CD8-positive, alpha-beta T cell (primary cell): ENCODE measurements at regions of chr12 and their contacts with region 1.

Region 1: GRCh38 chr12:4648501-4649357 is at the starts of genes AKAP3 and NDUFA9:
- DNase-seq: peak; percentile 58 to 90 (median 82)
- ATAC-seq: peak; percentile 96
- H3K4me3 ChIP-seq: peak within 1 kb of the TSS; percentile 68 to 92
- H3K4me3 Mint-ChIP-seq: peak within 1 kb of the TSS; percentile 90
- H3K27ac ChIP-seq: peak within 1 kb of the TSS; percentile 62 to 77
- H3K27ac Mint-ChIP-seq: peak within 1 kb of the TSS; percentile 93
- H3K4me1 ChIP-seq: peaks cover 22% of the 10 kb centered on the region
- H3K4me1 Mint-ChIP-seq: peaks cover 51% of the 10 kb centered on the region
- H3K27me3 ChIP-seq: no peaks in the 10 kb centered on the region
- H3K27me3 Mint-ChIP-seq: no peaks in the 10 kb centered on the region
- CTCF ChIP-seq: no peak
- total RNA-seq, gene AKAP3: 1.1 to 1.3 TPM
- total RNA-seq, gene NDUFA9: 94.2 to 95.2 TPM

Region 2: GRCh38 chr12:4030929-4031702 is 617.6 kb before region 1 on chr12:
- CTCF ChIA-PET with region 1: no interaction called
- POLR2A ChIA-PET with region 1: no interaction called
- intact Hi-C with region 1: loop called in 1 of 2 experiments (anchors 2 kb)
- DNase-seq: peak; percentile 48 to 88 (median 71)
- ATAC-seq: peak; percentile 91
- H3K4me3 ChIP-seq: peak overlapping the region; percentile 40 to 49
- H3K4me3 Mint-ChIP-seq: peak overlapping the region; percentile 78
- H3K27ac ChIP-seq: peak overlapping the region; percentile 37 to 40
- H3K27ac Mint-ChIP-seq: peak overlapping the region; percentile 70
- H3K4me1 ChIP-seq: peaks cover 32% of the 10 kb centered on the region
- H3K4me1 Mint-ChIP-seq: peaks cover 41% of the 10 kb centered on the region
- H3K27me3 ChIP-seq: no peaks in the 10 kb centered on the region
- H3K27me3 Mint-ChIP-seq: no peaks in the 10 kb centered on the region
- CTCF ChIP-seq: no peak

Region 3: GRCh38 chr12:4320853-4321701 is 327.7 kb before region 1 on chr12 and contains the start of gene TIGAR:
- CTCF ChIA-PET with region 1: no interaction called
- POLR2A ChIA-PET with region 1: interaction called, 3 read pairs
- intact Hi-C with region 1: loop called in 1 of 2 experiments (anchors 10 kb)
- DNase-seq: peak; percentile 79 to 97 (median 90)
- ATAC-seq: peak; percentile 96
- H3K4me3 ChIP-seq: peak within 1 kb of the TSS; percentile 86 to 89
- H3K4me3 Mint-ChIP-seq: peak within 1 kb of the TSS; percentile 96
- H3K27ac ChIP-seq: peak within 1 kb of the TSS; percentile 81 to 83
- H3K27ac Mint-ChIP-seq: peak within 1 kb of the TSS; percentile 95
- H3K4me1 ChIP-seq: peaks cover 25% of the 10 kb centered on the region
- H3K4me1 Mint-ChIP-seq: peaks cover 40% of the 10 kb centered on the region
- H3K27me3 ChIP-seq: no peaks in the 10 kb centered on the region
- H3K27me3 Mint-ChIP-seq: no peaks in the 10 kb centered on the region
- CTCF ChIP-seq: no peak
- total RNA-seq, gene TIGAR: 14.0 to 15.8 TPM

Region 4: DNA sequence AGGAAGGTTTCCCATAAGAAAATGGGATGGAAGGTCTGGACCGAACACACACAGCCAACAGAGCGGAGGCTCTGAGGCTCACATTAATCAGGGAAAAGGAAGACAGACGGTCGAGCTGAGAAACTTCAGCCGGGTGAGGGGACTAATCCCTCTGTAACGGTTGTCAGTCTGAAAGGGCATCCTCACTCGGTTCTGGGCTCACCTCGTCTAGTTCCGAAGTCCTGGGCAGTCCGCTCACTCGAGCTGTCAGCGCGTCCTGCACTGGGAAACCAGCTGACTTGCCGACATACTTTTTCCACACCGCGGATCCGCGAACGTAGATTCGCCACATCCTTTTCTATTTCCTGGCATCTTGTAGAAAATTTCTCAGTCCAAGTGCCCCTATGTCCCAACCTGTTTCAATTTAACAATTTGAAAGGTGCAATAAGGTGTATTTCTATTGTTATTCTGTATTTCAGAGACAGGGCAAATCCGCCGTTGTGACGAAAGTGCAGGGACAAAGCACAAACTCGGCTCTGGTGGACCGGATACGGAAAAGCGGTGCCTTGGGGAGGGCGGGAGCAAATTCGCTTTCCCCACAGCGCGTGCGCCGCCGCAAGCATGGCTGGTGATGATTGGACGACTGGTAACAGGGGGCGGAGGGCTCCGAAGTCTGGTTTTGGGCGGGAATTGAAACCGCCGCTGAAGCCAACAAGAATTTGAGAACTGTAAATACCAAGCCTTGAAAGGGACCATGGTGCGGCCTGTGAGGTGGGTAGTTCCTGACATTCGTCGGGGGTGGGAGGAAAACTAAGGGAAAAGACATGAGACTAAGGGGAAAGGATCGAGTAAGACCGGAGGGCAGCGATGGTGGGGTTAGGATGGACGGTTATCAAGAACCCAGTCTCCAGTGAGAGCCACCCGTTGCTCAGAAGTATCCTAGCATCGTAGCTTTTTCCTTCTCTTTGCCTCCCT is 110.2 kb before region 1 on chr12 and contains the start of gene RAD51AP1:
- CTCF ChIA-PET with region 1: no interaction called
- POLR2A ChIA-PET with region 1: no interaction called
- intact Hi-C with region 1: loop called (anchors 1 to 2 kb)
- DNase-seq: peak; percentile 89 to 98 (median 94)
- ATAC-seq: peak; percentile 99
- H3K4me3 ChIP-seq: peak within 1 kb of the TSS; percentile 68 to 97
- H3K4me3 Mint-ChIP-seq: peak within 1 kb of the TSS; percentile 98
- H3K27ac ChIP-seq: peak within 1 kb of the TSS; percentile 85 to 97
- H3K27ac Mint-ChIP-seq: peak within 1 kb of the TSS; percentile 98
- H3K4me1 ChIP-seq: peaks cover 7% of the 10 kb centered on the region
- H3K4me1 Mint-ChIP-seq: peaks cover 26% of the 10 kb centered on the region
- H3K27me3 ChIP-seq: no peaks in the 10 kb centered on the region
- H3K27me3 Mint-ChIP-seq: no peaks in the 10 kb centered on the region
- CTCF ChIP-seq: no peak
- total RNA-seq, gene RAD51AP1: 0.87 to 1.6 TPM

Region 5: GRCh38 chr12:4591180-4591687 is 57.5 kb before region 1 on chr12:
- CTCF ChIA-PET with region 1: no interaction called
- POLR2A ChIA-PET with region 1: no interaction called
- intact Hi-C with region 1: no loop called
- DNase-seq: no peak
- ATAC-seq: no peak
- H3K4me3 ChIP-seq: no peak overlapping the region
- H3K4me3 Mint-ChIP-seq: no peak overlapping the region
- H3K27ac ChIP-seq: no peak overlapping the region
- H3K27ac Mint-ChIP-seq: no peak overlapping the region
- H3K4me1 ChIP-seq: no peaks in the 10 kb centered on the region
- H3K4me1 Mint-ChIP-seq: no peaks in the 10 kb centered on the region
- H3K27me3 ChIP-seq: no peaks in the 10 kb centered on the region
- H3K27me3 Mint-ChIP-seq: peaks cover 7% of the 10 kb centered on the region
- CTCF ChIP-seq: no peak

Region 6: GRCh38 chr12:5034603-5035002 is 385.9 kb after region 1 on chr12:
- CTCF ChIA-PET with region 1: no interaction called
- POLR2A ChIA-PET with region 1: no interaction called
- intact Hi-C with region 1: no loop called
- DNase-seq: no peak
- ATAC-seq: no peak
- H3K4me3 ChIP-seq: no peak overlapping the region
- H3K4me3 Mint-ChIP-seq: no peak overlapping the region
- H3K27ac ChIP-seq: no peak overlapping the region
- H3K27ac Mint-ChIP-seq: no peak overlapping the region
- H3K4me1 ChIP-seq: no peaks in the 10 kb centered on the region
- H3K4me1 Mint-ChIP-seq: no peaks in the 10 kb centered on the region
- H3K27me3 ChIP-seq: no peaks in the 10 kb centered on the region
- H3K27me3 Mint-ChIP-seq: peaks cover 12% of the 10 kb centered on the region
- CTCF ChIP-seq: no peak